ENCODE measurements at regions of chr5 and their contacts with region 1.

Region 1: GRCh38 chr5:168219515-168220410 is 71.7 kb upstream of the WWC1 start:
- DNase-seq: peak; percentile 74
- ATAC-seq: peak; percentile 43
- H3K4me3 ChIP-seq: no peak overlapping the region
- H3K27ac ChIP-seq: no peak overlapping the region
- H3K4me1 ChIP-seq: no peaks in the 10 kb centered on the region
- H3K27me3 ChIP-seq: peaks cover 61% of the 10 kb centered on the region
- CTCF ChIP-seq: peak; percentile 79

Region 2: DNA sequence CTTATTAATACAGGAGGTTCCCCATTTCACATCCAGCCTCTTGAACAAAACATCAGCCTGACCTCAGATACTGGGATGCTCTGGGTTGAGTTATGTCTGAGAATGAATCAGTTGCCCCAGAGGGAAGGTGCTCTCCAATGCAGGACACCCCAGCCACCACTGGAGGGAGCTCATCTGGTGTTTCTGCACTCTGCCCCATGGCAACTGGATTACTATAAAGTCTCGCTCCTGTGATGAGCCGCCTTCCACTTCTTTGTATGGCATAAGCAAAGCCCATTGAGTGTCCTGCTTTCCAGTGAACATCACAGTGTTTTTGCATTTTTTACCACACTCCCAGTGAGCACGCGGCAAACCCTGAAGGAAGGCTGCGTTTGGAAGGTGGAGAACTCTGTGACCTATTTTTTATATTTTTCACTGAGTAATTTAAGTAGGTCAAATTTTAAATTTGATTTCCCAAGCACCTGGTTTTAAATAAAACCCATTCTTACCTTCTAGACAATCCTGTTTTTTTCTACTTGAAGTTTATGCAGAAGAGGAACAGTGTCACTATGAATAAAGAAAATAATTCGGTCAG is 105.2 kb before region 1 on chr5:
- CTCF ChIA-PET with region 1: interaction called, 16 read pairs
- POLR2A ChIA-PET with region 1: no interaction called
- intact Hi-C with region 1: loop called (anchors 1 kb)
- DNase-seq: peak; percentile 68
- ATAC-seq: peak; percentile 86
- H3K4me3 ChIP-seq: no peak overlapping the region
- H3K27ac ChIP-seq: no peak overlapping the region
- H3K4me1 ChIP-seq: no peaks in the 10 kb centered on the region
- H3K27me3 ChIP-seq: peaks cover 37% of the 10 kb centered on the region
- CTCF ChIP-seq: peak; percentile 76

Region 3: DNA sequence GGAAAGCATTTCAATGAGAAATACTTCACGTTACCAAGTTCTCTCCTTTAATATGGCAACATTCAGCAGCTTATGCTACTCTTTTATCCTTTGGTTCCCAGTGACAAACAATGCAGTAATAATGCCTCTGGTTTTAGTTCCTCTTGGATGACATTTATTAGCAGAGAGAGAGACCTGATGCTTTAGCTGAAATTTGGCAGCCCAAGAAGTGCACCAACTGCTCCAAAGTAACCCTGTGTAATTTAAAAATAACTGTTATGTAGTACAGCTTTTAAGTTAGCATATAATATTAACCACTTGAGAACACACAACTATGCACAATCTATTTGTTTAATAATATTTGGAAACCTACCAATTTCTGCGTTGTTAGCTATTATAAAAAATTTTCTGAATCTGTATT is 337.6 kb after region 1 on chr5:
- CTCF ChIA-PET with region 1: no interaction called
- POLR2A ChIA-PET with region 1: no interaction called
- intact Hi-C with region 1: no loop called
- DNase-seq: no peak
- ATAC-seq: no peak
- H3K4me3 ChIP-seq: no peak overlapping the region
- H3K27ac ChIP-seq: no peak overlapping the region
- H3K4me1 ChIP-seq: no peaks in the 10 kb centered on the region
- H3K27me3 ChIP-seq: no peaks in the 10 kb centered on the region
- CTCF ChIP-seq: no peak

Measured in PC-3 (cell line).